ENCODE measurements at regions of chr7 and their contacts with region 1.

Region 1: GRCh38 chr7:94449148-94449725 is 54.5 kb downstream of the COL1A2 start:
- DNase-seq: no peak
- ATAC-seq: peak in 1 of 4 donors; percentile 55
- H3K4me3 ChIP-seq: no peak overlapping the region
- H3K27ac ChIP-seq: no peak overlapping the region
- H3K4me1 ChIP-seq: peaks cover 0 to 15% (median 5%) of the 10 kb centered on the region in 12 donors
- H3K27me3 ChIP-seq: peaks cover 0 to 10% (median 0%) of the 10 kb centered on the region in 9 donors
- CTCF ChIP-seq: peak; percentile 42 to 78 (median 59)
- POLR2A ChIP-seq: no peak

Region 2: GRCh38 chr7:94649450-94649849 is 200.2 kb after region 1 on chr7:
- intact Hi-C with region 1: loop called in 3 of 10 experiments (anchors 10 kb)
- DNase-seq: no peak
- ATAC-seq: no peak
- H3K4me3 ChIP-seq: peak overlapping the region in 2 of 12 donors; percentile 4 to 29
- H3K27ac ChIP-seq: no peak overlapping the region
- H3K4me1 ChIP-seq: peaks cover 0 to 5% (median under 1%) of the 10 kb centered on the region in 12 donors
- H3K27me3 ChIP-seq: peaks cover 0 to 33% (median 4%) of the 10 kb centered on the region in 9 donors
- CTCF ChIP-seq: no peak
- POLR2A ChIP-seq: no peak

Region 3: GRCh38 chr7:95199779-95200558 is 750.7 kb after region 1 on chr7:
- intact Hi-C with region 1: loop called in 4 of 10 experiments (anchors 5 to 10 kb)
- DNase-seq: peak in 2 of 5 donors; percentile 22 to 28
- ATAC-seq: peak; percentile 75 to 87 (median 82)
- H3K4me3 ChIP-seq: no peak overlapping the region
- H3K27ac ChIP-seq: no peak overlapping the region
- H3K4me1 ChIP-seq: peaks cover 0 to 7% (median 0%) of the 10 kb centered on the region in 12 donors
- H3K27me3 ChIP-seq: no peaks in the 10 kb centered on the region
- CTCF ChIP-seq: peak; percentile 42 to 74 (median 63)
- POLR2A ChIP-seq: no peak

Region 4: GRCh38 chr7:95246831-95247370 is 797.7 kb after region 1 on chr7:
- intact Hi-C with region 1: loop called in 8 of 10 experiments (anchors 5 to 10 kb)
- DNase-seq: peak in 4 of 5 donors; percentile 25 to 32 (median 29)
- ATAC-seq: peak; percentile 55 to 85 (median 73)
- H3K4me3 ChIP-seq: peak overlapping the region in 4 of 12 donors; percentile 9 to 22 (median 22)
- H3K27ac ChIP-seq: no peak overlapping the region
- H3K4me1 ChIP-seq: peaks cover 0 to 6% (median 0%) of the 10 kb centered on the region in 12 donors
- H3K27me3 ChIP-seq: no peaks in the 10 kb centered on the region
- CTCF ChIP-seq: peak; percentile 36 to 76 (median 62)
- POLR2A ChIP-seq: no peak